PC-3 (cell line): ENCODE measurements at regions of chr9 and their contacts with region 1.

Region 1: DNA sequence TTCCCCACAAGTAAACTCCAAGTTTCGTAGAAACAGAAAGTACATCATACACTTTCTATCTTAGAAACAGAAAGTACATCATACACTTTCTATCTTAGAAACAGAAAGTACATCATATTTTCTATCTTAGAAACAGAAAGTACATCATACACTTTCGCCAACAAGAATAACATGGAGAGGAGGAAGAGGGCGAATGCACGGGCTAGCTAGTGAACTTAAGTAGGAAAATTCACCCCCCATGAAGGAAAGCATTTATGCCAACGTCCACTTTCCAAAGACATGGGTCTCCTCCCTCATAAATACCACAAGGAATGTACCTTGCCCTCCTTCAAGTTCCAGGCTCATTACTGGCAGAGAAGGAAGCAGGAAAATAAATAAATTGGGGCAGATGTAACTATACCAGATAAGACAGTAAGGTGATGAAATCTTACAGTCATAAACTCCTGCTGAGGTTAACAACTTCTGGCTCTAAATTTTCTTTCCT is 64.7 kb downstream of the FRMD3 start:
- DNase-seq: peak; percentile 51
- ATAC-seq: 0 out of 2 replicates have a peak, but pooled peaks have one; percentile 8
- H3K4me3 ChIP-seq: no peak overlapping the region
- H3K27ac ChIP-seq: peak overlapping the region; percentile 94
- H3K4me1 ChIP-seq: peaks cover 61% of the 10 kb centered on the region
- H3K27me3 ChIP-seq: no peaks in the 10 kb centered on the region
- CTCF ChIP-seq: no peak

Region 2: DNA sequence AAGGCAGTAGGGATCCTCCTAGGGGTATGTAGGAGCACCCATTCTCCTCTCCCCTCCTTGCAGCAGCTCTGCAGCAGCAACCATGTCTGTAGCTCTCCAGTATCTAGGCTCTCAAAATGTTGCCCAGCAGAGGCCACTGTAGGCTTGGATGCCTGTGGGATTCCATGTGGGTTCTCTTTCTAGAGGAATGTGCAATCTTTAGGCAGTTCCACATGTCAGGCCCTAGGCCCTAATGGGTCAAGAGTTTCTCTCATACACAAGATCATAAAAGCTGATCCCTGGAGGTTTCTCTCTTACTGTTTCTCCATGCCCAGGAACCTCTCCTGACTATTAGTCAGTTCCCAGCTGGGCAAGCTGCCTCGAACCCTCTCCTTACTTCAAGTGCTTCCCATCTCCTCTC is 151.1 kb before region 1 on chr9:
- CTCF ChIA-PET with region 1: no interaction called
- POLR2A ChIA-PET with region 1: no interaction called
- intact Hi-C with region 1: no loop called
- DNase-seq: no peak
- ATAC-seq: no peak
- H3K4me3 ChIP-seq: no peak overlapping the region
- H3K27ac ChIP-seq: no peak overlapping the region
- H3K4me1 ChIP-seq: no peaks in the 10 kb centered on the region
- H3K27me3 ChIP-seq: no peaks in the 10 kb centered on the region
- CTCF ChIP-seq: no peak

Region 3: DNA sequence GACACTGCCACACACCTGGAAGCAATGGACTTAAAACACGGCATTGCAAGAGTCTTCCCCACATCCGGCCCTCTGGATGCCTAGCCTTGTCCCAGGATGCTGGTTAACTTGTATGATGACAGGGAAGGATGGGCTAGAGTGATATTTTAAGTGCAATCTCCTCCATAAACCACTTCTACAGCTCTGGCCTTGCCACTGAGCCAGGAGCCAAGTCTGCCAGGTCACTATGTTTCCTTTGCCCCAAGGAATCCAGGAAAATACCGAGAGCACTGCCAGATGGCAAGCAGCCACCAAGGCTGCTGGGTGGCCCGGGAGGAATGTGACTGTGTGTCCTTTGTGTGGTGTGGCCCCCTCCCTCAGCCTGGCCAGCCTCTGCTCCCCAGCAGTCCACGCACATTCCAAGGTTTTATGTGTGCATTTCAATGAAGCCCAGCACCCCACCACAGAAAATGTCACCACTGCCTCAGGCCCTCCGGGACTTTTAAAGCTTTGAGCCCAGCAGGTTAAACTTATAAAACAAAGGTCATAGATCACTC is 41.4 kb before region 1 on chr9:
- CTCF ChIA-PET with region 1: no interaction called
- POLR2A ChIA-PET with region 1: no interaction called
- intact Hi-C with region 1: loop called (anchors 1 kb)
- DNase-seq: peak; percentile 95
- ATAC-seq: peak; percentile 86
- H3K4me3 ChIP-seq: peak overlapping the region; percentile 18; the same call in 1 of the 2 replicates
- H3K27ac ChIP-seq: peak overlapping the region; percentile 87
- H3K4me1 ChIP-seq: peaks cover 38% of the 10 kb centered on the region
- H3K27me3 ChIP-seq: no peaks in the 10 kb centered on the region
- CTCF ChIP-seq: no peak

Region 4: GRCh38 chr9:83511051-83511450 is 37.5 kb after region 1 on chr9:
- CTCF ChIA-PET with region 1: no interaction called
- POLR2A ChIA-PET with region 1: no interaction called
- intact Hi-C with region 1: loop called (anchors 1 kb)
- DNase-seq: peak; percentile 79
- ATAC-seq: peak; percentile 100
- H3K4me3 ChIP-seq: no peak overlapping the region
- H3K27ac ChIP-seq: peak overlapping the region; percentile 60
- H3K4me1 ChIP-seq: peaks cover 13% of the 10 kb centered on the region
- H3K27me3 ChIP-seq: no peaks in the 10 kb centered on the region
- CTCF ChIP-seq: no peak

Region 5: GRCh38 chr9:83538172-83538889 is 64.8 kb after region 1 on chr9 and contains the start of gene FRMD3:
- CTCF ChIA-PET with region 1: no interaction called
- POLR2A ChIA-PET with region 1: no interaction called
- intact Hi-C with region 1: loop called (anchors 2 kb)
- DNase-seq: peak; percentile 78
- ATAC-seq: peak; percentile 92
- H3K4me3 ChIP-seq: peak within 1 kb of the TSS; percentile 82
- H3K27ac ChIP-seq: peak within 1 kb of the TSS; percentile 16; the same call in 1 of the 2 replicates
- H3K4me1 ChIP-seq: peaks cover 3% of the 10 kb centered on the region; the same call in 1 of the 2 replicates
- H3K27me3 ChIP-seq: no peaks in the 10 kb centered on the region
- CTCF ChIP-seq: peak; percentile 71
- total RNA-seq, gene FRMD3: 3.9 and 6.0 TPM in 2 replicates